ENCODE measurements at regions of chr10 and their contacts with region 1.

Region 1: GRCh38 chr10:73997787-73998622 is at the start of gene VCL:
- DNase-seq: peak; percentile 99
- H3K4me3 Mint-ChIP-seq: peak within 1 kb of the TSS; percentile 94
- H3K27ac Mint-ChIP-seq: peak within 1 kb of the TSS; percentile 97
- H3K4me1 Mint-ChIP-seq: peaks cover 51% of the 10 kb centered on the region
- H3K27me3 Mint-ChIP-seq: no peaks in the 10 kb centered on the region
- total RNA-seq, gene VCL: 26.1 and 26.8 TPM in 2 replicates

Region 2: DNA sequence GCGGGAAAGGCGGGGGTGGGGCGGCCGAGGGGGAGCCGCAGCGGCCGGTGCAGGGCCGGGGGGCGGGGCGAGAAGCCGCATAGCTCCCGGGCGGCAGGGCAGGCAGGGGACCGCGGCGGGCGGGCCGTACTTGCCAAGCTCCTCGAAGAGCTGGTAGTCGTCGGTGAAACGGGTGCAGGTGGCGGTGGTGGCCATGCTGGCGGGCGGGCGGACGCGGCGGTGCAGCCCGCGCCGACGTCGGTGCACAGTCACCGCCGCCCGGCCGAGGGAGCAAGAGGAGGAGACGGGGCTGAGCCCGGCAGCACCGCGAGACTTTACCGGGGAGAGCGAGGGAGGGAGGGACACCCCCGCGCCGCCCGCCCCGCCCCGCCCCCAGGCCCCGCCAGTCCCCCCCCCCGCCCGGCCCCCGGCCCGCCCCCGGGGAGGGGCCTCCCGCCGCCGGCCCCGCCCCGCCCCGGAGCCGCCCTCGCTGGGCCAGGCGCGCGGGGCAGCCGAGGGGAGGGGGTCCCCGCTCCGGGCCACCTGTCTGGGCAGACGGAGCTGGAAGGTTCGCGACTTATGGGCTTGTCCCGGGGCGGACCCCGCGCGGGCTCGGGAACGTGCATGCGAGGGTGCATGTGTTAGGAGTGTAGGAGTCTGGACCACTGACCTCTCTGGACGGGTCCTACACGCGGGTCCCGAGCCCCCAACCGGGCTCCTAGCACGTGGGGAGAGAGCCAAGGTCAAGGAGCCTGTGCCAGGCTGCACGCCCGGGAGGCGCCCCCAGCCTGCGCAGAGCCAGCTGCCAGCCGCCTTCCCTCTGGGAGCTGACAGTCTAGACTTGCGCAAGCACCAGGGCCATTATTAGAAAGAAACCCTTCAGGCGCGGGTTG is 123.5 kb before region 1 on chr10 and contains the start of gene CAMK2G:
- intact Hi-C with region 1: loop called (anchors 1 kb)
- DNase-seq: peak; percentile 95
- H3K4me3 Mint-ChIP-seq: peak within 1 kb of the TSS; percentile 81
- H3K27ac Mint-ChIP-seq: peak within 1 kb of the TSS; percentile 90
- H3K4me1 Mint-ChIP-seq: peaks cover 53% of the 10 kb centered on the region
- H3K27me3 Mint-ChIP-seq: no peaks in the 10 kb centered on the region
- total RNA-seq, gene CAMK2G: 20.2 and 22.1 TPM in 2 replicates

Region 3: DNA sequence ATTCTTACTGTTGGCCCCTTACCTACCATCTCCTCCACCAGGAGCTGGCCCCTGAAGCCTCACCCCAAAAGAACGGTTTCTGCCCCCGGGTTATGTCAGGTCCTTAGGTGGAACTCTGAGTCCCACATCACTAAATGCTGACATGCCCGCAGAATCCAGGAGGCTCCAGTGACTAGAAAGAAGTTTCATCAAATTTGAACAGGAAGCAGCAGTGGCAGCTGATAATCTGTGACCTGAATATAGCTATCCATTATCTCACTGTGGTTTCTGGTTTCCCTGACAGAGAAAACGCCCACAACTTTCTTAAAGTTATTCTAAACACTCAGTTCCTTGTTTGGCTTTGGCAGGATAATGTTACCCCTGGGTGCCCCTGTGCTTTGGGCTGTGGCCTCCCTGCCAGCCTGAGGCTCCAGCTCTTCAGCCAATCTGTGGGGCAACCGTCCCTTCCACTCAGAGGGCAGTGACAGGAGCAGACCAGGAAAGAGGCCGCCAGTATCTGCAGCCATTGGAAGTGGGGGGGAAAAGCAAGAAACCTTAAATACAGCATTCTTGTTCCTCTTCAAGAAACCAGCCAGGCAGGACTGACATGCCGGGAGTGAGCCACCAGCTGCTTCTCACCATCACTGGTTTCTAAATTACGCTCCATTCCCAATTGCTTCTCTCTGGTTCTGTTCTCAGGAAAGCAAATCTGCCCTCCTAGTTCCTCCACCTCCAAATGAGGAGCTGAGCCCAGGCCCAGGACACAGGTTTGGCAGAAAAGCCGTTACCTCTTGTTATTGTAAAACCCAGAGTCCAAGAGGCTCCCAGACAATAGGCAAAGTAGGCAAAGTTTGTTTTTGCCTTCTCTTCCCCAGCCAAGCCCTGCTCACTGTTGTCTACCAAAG is 41.3 kb before region 1 on chr10:
- intact Hi-C with region 1: loop called (anchors 1 kb)
- DNase-seq: peak; percentile 80
- H3K4me3 Mint-ChIP-seq: peak overlapping the region; percentile 78
- H3K27ac Mint-ChIP-seq: peak overlapping the region; percentile 86
- H3K4me1 Mint-ChIP-seq: peaks cover 47% of the 10 kb centered on the region
- H3K27me3 Mint-ChIP-seq: peaks cover 2% of the 10 kb centered on the region

Region 4: DNA sequence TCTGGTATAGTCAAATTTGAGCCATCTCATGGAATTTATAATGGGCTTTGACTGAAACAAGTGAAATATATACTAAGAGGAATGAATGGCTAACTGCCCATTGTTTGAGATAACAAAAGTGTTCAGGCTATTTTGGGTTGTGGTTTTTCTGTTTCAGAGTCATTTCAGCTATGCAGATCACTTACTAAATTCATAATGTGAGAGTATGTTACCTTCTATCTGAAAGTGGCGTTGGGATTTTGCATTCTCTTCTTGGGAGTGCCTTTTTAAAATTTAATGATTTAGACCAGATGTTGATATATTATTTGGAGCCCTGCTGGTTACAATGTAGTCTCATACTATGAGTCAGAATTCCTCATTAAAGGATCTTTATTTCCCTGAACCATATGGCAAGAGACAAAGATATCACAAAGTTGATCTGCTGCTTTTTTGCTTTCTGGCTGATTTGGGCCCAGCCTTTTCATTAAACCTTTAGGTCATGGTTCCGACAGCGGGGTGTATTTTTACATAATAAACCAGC is 10.3 kb after region 1 on chr10:
- intact Hi-C with region 1: no loop called
- DNase-seq: no peak
- H3K4me3 Mint-ChIP-seq: no peak overlapping the region
- H3K27ac Mint-ChIP-seq: no peak overlapping the region
- H3K4me1 Mint-ChIP-seq: peaks cover 33% of the 10 kb centered on the region
- H3K27me3 Mint-ChIP-seq: no peaks in the 10 kb centered on the region

Region 5: DNA sequence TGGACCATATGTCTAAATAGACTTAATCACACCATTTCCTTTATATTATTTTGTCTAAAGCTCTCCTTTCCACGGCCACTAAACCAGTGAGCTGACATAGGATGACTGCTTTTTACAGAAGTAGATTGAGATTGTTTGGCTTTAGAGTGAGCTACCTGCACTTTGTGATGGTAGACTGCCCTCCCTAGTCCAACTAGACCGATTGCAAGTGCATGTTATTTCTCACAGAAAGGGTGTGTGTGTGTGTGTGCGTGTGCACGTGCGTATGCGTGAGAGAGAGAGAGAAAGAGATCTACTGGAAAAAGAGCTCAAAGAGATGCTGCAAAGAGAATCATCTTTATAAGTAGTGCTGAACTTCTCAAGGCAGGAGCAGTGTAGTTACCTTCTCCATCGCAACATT is 60.7 kb after region 1 on chr10:
- intact Hi-C with region 1: loop called (anchors 1 kb)
- DNase-seq: peak; percentile 75
- H3K4me3 Mint-ChIP-seq: no peak overlapping the region
- H3K27ac Mint-ChIP-seq: no peak overlapping the region
- H3K4me1 Mint-ChIP-seq: peaks cover 32% of the 10 kb centered on the region
- H3K27me3 Mint-ChIP-seq: no peaks in the 10 kb centered on the region

Region 6: GRCh38 chr10:74081192-74081803 is 83.3 kb after region 1 on chr10:
- intact Hi-C with region 1: loop called (anchors 5 kb)
- DNase-seq: peak; percentile 81
- H3K4me3 Mint-ChIP-seq: no peak overlapping the region
- H3K27ac Mint-ChIP-seq: no peak overlapping the region
- H3K4me1 Mint-ChIP-seq: peaks cover 39% of the 10 kb centered on the region
- H3K27me3 Mint-ChIP-seq: no peaks in the 10 kb centered on the region

Region 7: DNA sequence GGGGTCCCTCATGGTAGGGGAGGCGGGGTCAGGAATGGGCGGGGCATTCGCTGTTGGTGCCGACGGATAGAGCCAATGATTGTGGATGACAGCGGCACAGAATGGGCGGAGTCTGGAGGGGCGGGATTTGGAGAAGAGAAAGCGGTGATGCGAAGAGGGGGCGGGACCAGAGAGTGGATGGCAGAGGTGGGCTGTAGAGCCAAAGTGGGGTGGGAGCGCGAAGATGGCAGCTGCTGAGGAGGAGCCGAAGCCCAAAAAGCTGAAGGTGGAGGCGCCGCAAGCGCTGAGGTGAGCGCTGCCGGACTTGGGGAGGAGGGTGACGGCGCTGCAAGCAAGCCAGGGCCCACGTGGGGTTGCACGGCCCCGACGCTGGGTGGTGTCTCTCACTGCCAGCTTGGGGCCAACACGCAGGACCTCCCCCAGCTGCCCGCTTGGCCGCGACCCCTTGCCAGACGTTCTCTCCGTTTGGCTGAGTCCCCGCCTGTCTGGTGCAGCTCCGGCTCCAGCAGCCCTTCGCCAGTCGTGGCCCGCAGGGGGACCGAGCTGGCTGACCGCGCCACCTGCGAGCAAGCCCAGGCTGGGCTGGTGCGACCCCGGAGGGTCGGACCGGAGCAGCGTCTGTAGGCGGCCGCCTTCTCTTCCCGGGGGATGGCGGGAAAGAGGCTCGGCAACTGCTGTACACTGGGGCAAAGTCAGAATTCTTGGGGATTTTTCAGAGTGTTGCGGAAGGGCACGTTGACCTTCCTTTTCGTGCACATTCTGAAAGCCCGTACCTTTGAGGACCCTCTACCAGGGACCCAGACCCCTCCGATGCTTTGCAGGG is 153.3 kb after region 1 on chr10 and contains the start of gene ADK:
- intact Hi-C with region 1: loop called (anchors 1 kb)
- DNase-seq: peak; percentile 100
- H3K4me3 Mint-ChIP-seq: no peak within 1 kb of the TSS
- H3K27ac Mint-ChIP-seq: no peak within 1 kb of the TSS
- H3K4me1 Mint-ChIP-seq: peaks cover 28% of the 10 kb centered on the region
- H3K27me3 Mint-ChIP-seq: no peaks in the 10 kb centered on the region
- total RNA-seq, gene ADK: 54.8 and 58.3 TPM in 2 replicates

Measured in activated CD4-positive, alpha-beta T cell treated with anti-CD3 and anti-CD28 coated beads, Interleukin-2, amount 10 ng/mL, durations not matched to agents 24 days and 14 days (primary cell).